GM18951 (cell line): ENCODE measurements at regions of chr7 and their contacts with region 1.

Region 1: GRCh38 chr7:4631664-4632171 is 50.4 kb upstream of the FOXK1 start:
- POLR2A ChIP-seq: no peak

Region 2: DNA sequence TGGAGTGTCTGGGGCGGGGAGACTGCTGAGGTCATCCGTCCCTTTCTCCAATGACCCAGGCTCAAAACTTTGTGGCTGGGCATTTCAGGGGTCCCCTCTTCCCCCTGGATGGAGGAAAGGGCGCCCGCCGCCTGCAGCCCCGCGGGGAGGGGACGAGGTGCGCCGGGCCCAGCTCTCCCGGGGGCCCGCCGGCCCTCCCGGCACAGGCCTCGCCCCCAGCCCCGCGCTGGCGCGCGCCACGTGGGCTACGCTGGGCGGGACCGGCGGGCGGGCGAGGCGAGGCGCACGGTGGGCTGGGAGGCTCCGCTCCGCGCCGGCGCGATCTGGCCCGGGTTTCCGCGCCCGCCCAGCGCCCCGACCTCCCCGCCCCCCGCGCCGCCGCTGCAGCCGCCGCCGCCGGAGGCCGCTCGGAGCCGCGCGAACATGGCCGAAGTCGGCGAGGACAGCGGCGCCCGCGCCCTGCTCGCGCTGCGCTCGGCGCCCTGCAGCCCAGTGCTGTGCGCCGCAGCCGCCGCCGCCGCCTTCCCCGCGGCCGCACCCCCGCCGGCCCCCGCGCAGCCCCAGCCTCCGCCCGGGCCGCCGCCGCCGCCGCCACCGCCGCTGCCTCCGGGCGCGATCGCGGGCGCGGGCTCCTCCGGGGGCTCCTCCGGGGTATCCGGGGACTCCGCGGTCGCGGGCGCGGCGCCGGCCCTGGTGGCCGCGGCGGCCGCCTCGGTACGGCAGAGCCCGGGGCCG is 50.3 kb after region 1 on chr7 and contains the start of gene FOXK1:
- in situ Hi-C with region 1: loop called (anchors 10 kb)
- POLR2A ChIP-seq: peak; percentile 79

Region 3: GRCh38 chr7:5743803-5744202 is 1112.1 kb after region 1 on chr7:
- in situ Hi-C with region 1: no loop called
- POLR2A ChIP-seq: no peak